GM12878 (cell line): ENCODE measurements at regions of chr1 and their contacts with region 1.

Region 1: GRCh38 chr1:28248283-28249012 is 10.9 kb upstream of the SESN2 start:
- DNase-seq: no peak
- ATAC-seq: peak; percentile 53
- H3K4me3 ChIP-seq: peak overlapping the region; percentile 3; the same call in 1 of the 2 replicates
- H3K27ac ChIP-seq: peak overlapping the region; percentile 87
- H3K4me1 ChIP-seq: peaks cover 39% of the 10 kb centered on the region
- H3K27me3 ChIP-seq: no peaks in the 10 kb centered on the region
- CTCF ChIP-seq: peak; percentile 86 to 98 (median 91)
- EP300 ChIP-seq: no peak
- POLR2A ChIP-seq: 0 out of 2 replicates have a peak, but pooled peaks have one; percentile 13
- RAD21 ChIP-seq: peak; percentile 87

Region 2: GRCh38 chr1:27872059-27872801 is 376.2 kb before region 1 on chr1 and contains the start of gene THEMIS2:
- CTCF ChIA-PET with region 1: no interaction called
- POLR2A ChIA-PET with region 1: no interaction called
- RAD21 ChIA-PET with region 1: no interaction called
- SMC1A ChIA-PET with region 1: no interaction called
- in situ Hi-C with region 1: no loop called
- intact Hi-C with region 1: loop called (anchors 10 kb)
- DNase-seq: no peak
- ATAC-seq: peak; percentile 66
- H3K4me3 ChIP-seq: peak within 1 kb of the TSS; percentile 90
- H3K27ac ChIP-seq: peak within 1 kb of the TSS; percentile 93
- H3K4me1 ChIP-seq: peaks cover 44% of the 10 kb centered on the region
- H3K27me3 ChIP-seq: no peaks in the 10 kb centered on the region
- CTCF ChIP-seq: no peak
- EP300 ChIP-seq: no peak
- POLR2A ChIP-seq: peak; percentile 88
- RAD21 ChIP-seq: no peak
- polyA plus RNA-seq, gene THEMIS2: 9.1 to 12.9 TPM

Region 3: GRCh38 chr1:28259307-28260167 is 11.1 kb after region 1 on chr1 and contains the start of gene SESN2:
- CTCF ChIA-PET with region 1: interaction called, 33 read pairs
- POLR2A ChIA-PET with region 1: interaction called, 51 read pairs
- RAD21 ChIA-PET with region 1: interaction called, 28 read pairs
- SMC1A ChIA-PET with region 1: interaction called, 24 read pairs
- in situ Hi-C with region 1: no loop called
- intact Hi-C with region 1: no loop called
- DNase-seq: peak; percentile 84
- ATAC-seq: peak; percentile 97
- H3K4me3 ChIP-seq: peak within 1 kb of the TSS; percentile 97
- H3K27ac ChIP-seq: peak within 1 kb of the TSS; percentile 55
- H3K4me1 ChIP-seq: peaks cover 5% of the 10 kb centered on the region
- H3K27me3 ChIP-seq: no peaks in the 10 kb centered on the region
- CTCF ChIP-seq: no peak
- EP300 ChIP-seq: no peak
- POLR2A ChIP-seq: peak; percentile 99
- RAD21 ChIP-seq: no peak
- polyA plus RNA-seq, gene SESN2: 1.5 to 2.7 TPM

Region 4: DNA sequence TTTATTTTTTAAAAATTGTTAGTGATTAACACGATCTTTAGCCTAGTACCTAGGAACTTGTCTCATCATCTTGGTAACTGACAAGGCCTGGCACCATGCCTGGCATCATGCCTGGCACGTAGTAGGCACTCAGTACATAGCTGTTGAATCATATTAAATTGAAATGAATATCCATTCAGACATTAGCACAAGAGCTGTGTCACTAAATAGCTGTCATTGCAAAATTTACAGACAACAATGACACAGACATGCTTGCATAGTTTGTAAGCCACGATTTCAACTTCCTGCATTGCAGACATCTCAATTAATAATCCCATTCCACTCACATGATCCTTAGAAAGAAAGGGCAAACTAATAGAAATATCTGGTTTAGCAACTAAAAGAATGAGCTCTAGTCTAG is 105.7 kb after region 1 on chr1:
- CTCF ChIA-PET with region 1: interaction called, 138 read pairs
- POLR2A ChIA-PET with region 1: interaction called, 5 read pairs
- RAD21 ChIA-PET with region 1: interaction called, 34 read pairs
- SMC1A ChIA-PET with region 1: interaction called, 38 read pairs
- in situ Hi-C with region 1: no loop called
- intact Hi-C with region 1: loop called (anchors 2 kb)
- DNase-seq: no peak
- ATAC-seq: no peak
- H3K4me3 ChIP-seq: no peak overlapping the region
- H3K27ac ChIP-seq: no peak overlapping the region
- H3K4me1 ChIP-seq: no peaks in the 10 kb centered on the region
- H3K27me3 ChIP-seq: no peaks in the 10 kb centered on the region
- CTCF ChIP-seq: no peak
- EP300 ChIP-seq: no peak
- POLR2A ChIP-seq: no peak
- RAD21 ChIP-seq: no peak

Region 5: DNA sequence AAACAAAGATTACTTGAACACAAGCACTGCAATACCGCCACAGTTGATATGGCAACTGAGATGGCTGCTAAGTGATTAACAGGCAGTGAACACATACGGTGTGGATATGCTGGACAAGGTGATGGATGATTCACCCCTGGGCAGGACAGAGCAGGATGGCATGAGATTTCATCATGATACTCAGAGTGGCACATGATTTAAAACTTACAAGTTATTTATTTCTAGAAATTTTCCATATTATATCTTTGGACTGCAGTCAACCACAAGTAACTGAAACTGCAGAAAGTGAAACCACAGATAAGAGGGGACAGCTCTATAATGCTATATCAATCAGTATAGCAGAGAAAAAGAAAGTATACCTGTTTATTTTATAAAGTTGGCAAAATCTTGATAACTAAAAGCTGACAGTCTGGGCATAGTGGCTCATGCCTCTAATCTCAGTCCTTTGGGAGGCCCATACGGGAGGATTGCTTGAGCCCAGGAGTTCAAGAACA is 169.0 kb after region 1 on chr1:
- CTCF ChIA-PET with region 1: interaction called, 10 read pairs
- POLR2A ChIA-PET with region 1: interaction called, 3 read pairs
- RAD21 ChIA-PET with region 1: interaction called, 5 read pairs
- SMC1A ChIA-PET with region 1: interaction called, 8 read pairs
- in situ Hi-C with region 1: no loop called
- intact Hi-C with region 1: no loop called
- DNase-seq: no peak
- ATAC-seq: peak; percentile 94
- H3K4me3 ChIP-seq: peak overlapping the region; percentile 48; the same call in 1 of the 2 replicates
- H3K27ac ChIP-seq: peak overlapping the region; percentile 50; the same call in 1 of the 2 replicates
- H3K4me1 ChIP-seq: peaks cover 7% of the 10 kb centered on the region
- H3K27me3 ChIP-seq: no peaks in the 10 kb centered on the region
- CTCF ChIP-seq: no peak
- EP300 ChIP-seq: no peak
- POLR2A ChIP-seq: no peak
- RAD21 ChIP-seq: no peak

Region 6: GRCh38 chr1:28443550-28443949 is 195.1 kb after region 1 on chr1:
- CTCF ChIA-PET with region 1: no interaction called
- POLR2A ChIA-PET with region 1: no interaction called
- RAD21 ChIA-PET with region 1: no interaction called
- SMC1A ChIA-PET with region 1: no interaction called
- in situ Hi-C with region 1: no loop called
- intact Hi-C with region 1: no loop called
- DNase-seq: no peak
- ATAC-seq: no peak
- H3K4me3 ChIP-seq: no peak overlapping the region
- H3K27ac ChIP-seq: no peak overlapping the region
- H3K4me1 ChIP-seq: peaks cover 4% of the 10 kb centered on the region
- H3K27me3 ChIP-seq: no peaks in the 10 kb centered on the region
- CTCF ChIP-seq: no peak
- EP300 ChIP-seq: no peak
- POLR2A ChIP-seq: no peak
- RAD21 ChIP-seq: no peak

Region 7: DNA sequence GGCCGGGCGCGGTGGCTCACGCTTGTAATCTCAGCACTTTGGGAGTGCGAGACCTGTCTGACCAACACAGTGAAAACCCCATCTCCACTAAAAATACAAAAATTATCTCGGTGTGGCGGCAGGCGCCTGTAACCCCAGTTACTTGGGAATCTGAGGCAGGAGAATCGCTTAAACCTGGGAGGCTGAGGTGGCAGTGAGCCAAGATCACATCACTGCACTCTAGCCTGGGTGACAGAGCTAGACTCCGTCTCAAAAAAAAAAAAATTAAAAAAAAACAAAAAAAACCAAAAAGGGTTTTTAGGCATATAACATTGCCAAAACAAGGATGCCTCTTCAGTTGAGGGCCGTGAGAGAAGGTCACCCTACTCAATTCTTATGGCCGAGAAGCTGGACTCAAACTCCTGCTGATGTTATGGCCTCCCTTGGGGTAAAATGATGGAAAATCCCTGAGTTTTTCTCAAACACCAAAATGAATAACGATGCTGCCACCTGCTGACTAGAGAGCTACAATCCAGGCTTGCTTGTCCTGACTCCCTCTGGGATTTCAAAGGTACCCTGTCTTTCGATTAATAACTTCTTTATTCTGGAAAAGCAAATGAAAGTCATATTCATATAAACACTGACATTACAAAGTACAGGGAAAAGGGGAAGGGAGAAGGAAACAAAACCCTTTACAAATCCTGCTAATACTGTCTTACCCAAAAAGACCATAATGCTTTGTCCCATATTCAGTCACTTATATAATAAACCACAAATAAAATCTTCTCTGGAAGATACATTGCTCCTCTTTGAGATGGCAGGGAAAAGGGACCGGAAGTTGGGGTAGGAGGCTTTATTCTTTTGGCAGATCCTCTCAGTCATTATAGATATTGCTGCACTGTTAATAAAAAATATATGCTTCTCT is 354.3 kb after region 1 on chr1:
- CTCF ChIA-PET with region 1: interaction called, 56 read pairs
- POLR2A ChIA-PET with region 1: interaction called, 4 read pairs
- RAD21 ChIA-PET with region 1: interaction called, 22 read pairs
- SMC1A ChIA-PET with region 1: interaction called, 24 read pairs
- in situ Hi-C with region 1: loop called (anchors 5 kb)
- intact Hi-C with region 1: loop called (anchors 5 kb)
- DNase-seq: no peak
- ATAC-seq: peak; percentile 57
- H3K4me3 ChIP-seq: no peak overlapping the region
- H3K27ac ChIP-seq: no peak overlapping the region
- H3K4me1 ChIP-seq: peaks cover 22% of the 10 kb centered on the region
- H3K27me3 ChIP-seq: no peaks in the 10 kb centered on the region
- CTCF ChIP-seq: peak; percentile 56 to 85 (median 59); a peak in 5 of 6 replicates
- EP300 ChIP-seq: no peak
- POLR2A ChIP-seq: no peak
- RAD21 ChIP-seq: peak; percentile 84